ENCODE measurements at regions of chr3 and their contacts with region 1.

Region 1: GRCh38 chr3:14203521-14204079 is 25.0 kb downstream of the LSM3 start:
- DNase-seq: peak; percentile 64
- H3K4me3 Mint-ChIP-seq: no peak overlapping the region
- H3K27ac Mint-ChIP-seq: no peak overlapping the region
- H3K4me1 Mint-ChIP-seq: peaks cover 63% of the 10 kb centered on the region
- H3K27me3 Mint-ChIP-seq: no peaks in the 10 kb centered on the region
- CTCF ChIP-seq: peak; percentile 71

Region 2: GRCh38 chr3:14170531-14171173 is 32.9 kb before region 1 on chr3:
- CTCF ChIA-PET with region 1: no interaction called
- intact Hi-C with region 1: no loop called
- DNase-seq: no peak
- H3K4me3 Mint-ChIP-seq: no peak overlapping the region
- H3K27ac Mint-ChIP-seq: peak overlapping the region; percentile 9
- H3K4me1 Mint-ChIP-seq: peaks cover 11% of the 10 kb centered on the region
- H3K27me3 Mint-ChIP-seq: no peaks in the 10 kb centered on the region
- CTCF ChIP-seq: no peak

Region 3: DNA sequence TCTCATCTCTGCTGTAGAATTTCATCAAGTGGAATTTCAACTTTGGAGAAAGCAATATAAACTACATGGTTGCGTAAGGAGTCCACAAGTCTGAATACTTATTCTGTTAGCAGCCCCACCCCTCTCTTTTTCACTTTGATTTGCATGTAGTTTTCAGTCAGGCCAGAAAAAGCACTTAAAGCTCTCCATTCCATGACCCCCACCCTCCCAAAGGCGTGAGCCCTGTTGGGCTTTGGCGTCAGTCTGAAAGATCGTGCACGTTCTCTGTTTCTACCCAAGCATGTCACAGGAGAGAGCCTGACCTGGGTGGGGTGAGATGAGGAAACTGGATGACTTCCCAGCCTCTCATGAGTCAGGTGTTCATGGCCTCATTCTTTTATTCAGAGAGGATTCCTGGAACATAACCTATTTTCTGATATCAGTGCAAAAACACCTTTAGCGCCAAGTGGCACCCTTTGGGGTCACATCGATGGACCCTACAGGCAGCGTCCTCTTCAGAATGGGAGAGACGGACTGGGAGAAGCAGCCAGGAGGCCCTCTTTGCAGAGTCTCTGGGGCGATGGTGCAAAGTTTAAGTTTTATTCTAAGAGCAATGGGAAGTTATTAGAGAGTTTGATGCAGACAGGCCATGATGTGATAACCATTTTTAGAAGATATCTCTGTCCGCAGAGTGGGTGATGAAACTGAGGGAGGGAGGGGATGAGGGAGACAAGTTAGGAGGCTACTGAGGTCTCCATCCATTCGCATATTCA is 30.8 kb after region 1 on chr3:
- CTCF ChIA-PET with region 1: interaction called, 12 read pairs
- intact Hi-C with region 1: no loop called
- DNase-seq: peak; percentile 66
- H3K4me3 Mint-ChIP-seq: no peak overlapping the region
- H3K27ac Mint-ChIP-seq: peak overlapping the region; percentile 87
- H3K4me1 Mint-ChIP-seq: peaks cover 49% of the 10 kb centered on the region
- H3K27me3 Mint-ChIP-seq: no peaks in the 10 kb centered on the region
- CTCF ChIP-seq: no peak

Region 4: DNA sequence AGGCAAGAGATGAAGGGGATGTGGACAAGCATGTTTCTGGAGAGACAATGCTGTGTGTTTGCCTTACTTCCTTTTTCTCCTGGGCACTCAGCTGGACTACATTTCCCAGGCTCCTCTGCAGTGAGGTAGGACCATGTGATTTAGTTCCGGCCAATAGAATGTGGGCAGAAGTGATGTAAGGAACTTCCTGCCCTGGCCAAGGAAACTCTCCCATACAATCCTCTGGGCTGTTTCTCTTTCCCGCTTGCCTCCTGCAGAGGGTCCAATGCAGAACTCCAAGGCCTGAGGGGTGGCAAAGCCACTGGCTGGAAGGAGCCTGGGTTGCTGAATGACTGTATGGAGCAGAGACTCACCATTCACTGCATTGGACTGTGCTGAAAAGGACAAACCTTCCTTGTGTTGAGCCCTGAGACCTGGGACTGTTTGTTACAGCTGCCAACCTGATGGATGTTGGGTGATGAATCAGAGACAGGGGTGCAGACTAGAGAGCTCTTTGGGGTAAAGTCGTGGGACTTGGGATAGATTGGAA is 116.1 kb after region 1 on chr3:
- CTCF ChIA-PET with region 1: interaction called, 21 read pairs
- intact Hi-C with region 1: loop called (anchors 2 kb)
- DNase-seq: peak; percentile 78
- H3K4me3 Mint-ChIP-seq: peak overlapping the region; percentile 39
- H3K27ac Mint-ChIP-seq: peak overlapping the region; percentile 14
- H3K4me1 Mint-ChIP-seq: peaks cover 28% of the 10 kb centered on the region
- H3K27me3 Mint-ChIP-seq: no peaks in the 10 kb centered on the region
- CTCF ChIP-seq: no peak

Region 5: DNA sequence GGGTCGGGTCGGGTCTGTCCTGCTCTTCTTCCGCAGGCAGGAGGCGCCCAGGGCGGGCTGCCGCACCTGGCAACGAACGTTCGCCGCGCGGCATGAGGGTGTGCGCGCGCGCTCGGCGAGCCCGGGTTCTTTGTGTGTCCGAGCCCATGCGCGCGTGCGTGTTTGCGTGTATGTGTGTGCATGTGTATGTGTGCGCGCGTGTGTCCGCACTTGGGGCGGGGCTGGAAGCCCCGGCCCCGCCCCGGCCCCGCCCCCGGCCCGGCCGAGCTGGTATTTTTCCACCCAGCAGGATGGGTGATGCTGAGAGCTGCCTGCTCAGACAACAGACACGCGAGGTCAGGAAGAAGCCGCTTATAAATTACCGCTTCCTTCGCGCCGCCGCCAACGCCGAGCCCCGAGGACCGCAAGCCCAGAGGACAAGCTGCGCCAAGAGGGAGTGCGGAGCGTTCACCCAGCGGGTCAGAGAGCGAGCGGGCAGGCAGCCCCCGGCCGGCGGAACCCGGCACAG is 198.8 kb after region 1 on chr3 and contains the start of gene SLC6A6:
- CTCF ChIA-PET with region 1: interaction called, 13 read pairs
- intact Hi-C with region 1: no loop called
- DNase-seq: peak; percentile 94
- H3K4me3 Mint-ChIP-seq: peak within 1 kb of the TSS; percentile 97
- H3K27ac Mint-ChIP-seq: peak within 1 kb of the TSS; percentile 74
- H3K4me1 Mint-ChIP-seq: peaks cover 18% of the 10 kb centered on the region
- H3K27me3 Mint-ChIP-seq: no peaks in the 10 kb centered on the region
- CTCF ChIP-seq: peak; percentile 25
- total RNA-seq, gene SLC6A6: 46.3 and 48.3 TPM in 2 replicates

Region 6: DNA sequence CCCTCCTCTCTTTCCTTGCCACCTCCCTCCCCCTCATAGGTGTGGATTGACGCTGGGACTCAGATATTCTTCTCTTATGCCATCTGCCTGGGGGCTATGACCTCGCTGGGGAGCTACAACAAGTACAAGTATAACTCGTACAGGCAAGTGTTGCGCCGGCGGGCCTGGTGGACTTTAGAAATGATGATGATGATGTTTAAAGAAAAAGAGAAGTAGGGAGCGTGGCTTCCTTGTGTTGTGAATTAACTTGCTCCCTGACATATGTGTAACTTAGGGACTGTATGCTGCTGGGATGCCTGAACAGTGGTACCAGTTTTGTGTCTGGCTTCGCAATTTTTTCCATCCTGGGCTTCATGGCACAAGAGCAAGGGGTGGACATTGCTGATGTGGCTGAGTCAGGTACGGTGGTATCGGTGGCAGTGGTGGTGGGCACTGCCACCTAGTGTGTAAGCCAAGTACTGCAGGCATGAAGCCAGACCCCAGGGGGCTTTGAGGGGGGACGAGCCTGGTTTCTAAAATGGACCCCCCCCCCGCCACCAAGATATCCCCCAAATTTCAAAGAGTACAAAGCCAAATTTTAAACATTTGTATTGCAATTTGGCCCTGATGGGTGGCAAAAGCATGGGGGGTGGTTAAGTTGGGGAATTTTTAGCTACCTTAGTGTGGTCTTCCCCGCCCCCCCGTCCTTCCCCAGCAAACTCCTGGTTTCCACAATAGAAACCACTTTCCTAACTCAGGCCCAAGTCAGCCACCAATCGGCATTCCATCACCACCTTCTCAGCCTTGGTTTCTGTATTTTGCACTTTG is 264.4 kb after region 1 on chr3:
- CTCF ChIA-PET with region 1: interaction called, 11 read pairs
- intact Hi-C with region 1: loop called (anchors 1 kb)
- DNase-seq: peak; percentile 50
- H3K4me3 Mint-ChIP-seq: no peak overlapping the region
- H3K27ac Mint-ChIP-seq: no peak overlapping the region
- H3K4me1 Mint-ChIP-seq: peaks cover 9% of the 10 kb centered on the region
- H3K27me3 Mint-ChIP-seq: no peaks in the 10 kb centered on the region
- CTCF ChIP-seq: peak; percentile 88

Measured in Calu3 (cell line).